ENCODE measurements at regions of chr1 and their contacts with region 1.

Region 1: DNA sequence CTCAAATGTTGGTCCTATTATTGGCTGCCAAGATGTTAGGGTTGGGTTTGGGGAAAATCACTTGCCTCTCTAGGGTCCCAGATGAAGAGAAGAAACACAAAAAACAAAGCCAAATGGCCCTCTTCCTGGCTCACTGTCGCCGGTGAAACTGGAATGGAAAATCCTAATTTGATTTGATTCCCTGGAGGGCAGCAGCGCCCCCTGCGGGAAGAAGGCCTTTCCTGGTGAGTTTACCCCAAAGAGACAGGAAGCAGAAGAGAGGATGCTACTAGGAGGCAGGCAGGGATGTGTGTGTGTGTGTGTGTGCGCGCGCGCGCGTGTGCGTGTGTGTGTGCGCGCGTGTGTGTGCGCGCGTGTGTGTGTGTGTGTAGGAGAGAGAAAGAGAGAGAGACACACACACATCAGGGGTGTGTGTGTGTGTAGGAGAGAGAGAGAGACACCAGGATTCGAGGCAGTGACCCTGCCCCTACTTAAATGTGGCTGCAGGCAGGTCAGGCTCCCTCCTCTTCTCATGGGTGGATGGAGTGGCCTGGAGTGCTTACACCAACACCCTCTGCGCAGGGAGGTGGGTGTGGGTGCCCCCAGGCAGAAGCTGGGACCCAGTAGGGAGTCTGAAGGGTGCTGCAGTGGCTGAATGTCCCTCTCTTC is 3.1 kb upstream of the SELENON start:
- DNase-seq: peak; percentile 84 to 93 (median 89)
- H3K4me3 ChIP-seq: no peak overlapping the region
- H3K27ac ChIP-seq: peak overlapping the region in 1 of 2 donors; percentile 48
- H3K4me1 ChIP-seq: peaks cover 0 to 28% (median 10%) of the 10 kb centered on the region in 3 donors
- H3K27me3 ChIP-seq: no peaks in the 10 kb centered on the region
- CTCF ChIP-seq: peak; percentile 93

Region 2: GRCh38 chr1:25492323-25492722 is 304.6 kb before region 1 on chr1:
- intact Hi-C with region 1: no loop called
- DNase-seq: no peak
- H3K4me3 ChIP-seq: no peak overlapping the region
- H3K27ac ChIP-seq: no peak overlapping the region
- H3K4me1 ChIP-seq: no peaks in the 10 kb centered on the region
- H3K27me3 ChIP-seq: no peaks in the 10 kb centered on the region
- CTCF ChIP-seq: no peak

Region 3: GRCh38 chr1:25616095-25616986 is 180.6 kb before region 1 on chr1 and contains the start of gene MAN1C1:
- intact Hi-C with region 1: loop called (anchors 10 kb)
- DNase-seq: peak; percentile 87 to 96 (median 92)
- H3K4me3 ChIP-seq: peak within 1 kb of the TSS in 2 of 3 donors; percentile 57 to 65
- H3K27ac ChIP-seq: peak within 1 kb of the TSS; percentile 58 to 74
- H3K4me1 ChIP-seq: peaks cover 0 to 22% (median 9%) of the 10 kb centered on the region in 3 donors
- H3K27me3 ChIP-seq: peaks cover 2% of the 10 kb centered on the region
- CTCF ChIP-seq: peak; percentile 25
- total RNA-seq, gene MAN1C1: 31.7 TPM

Region 4: GRCh38 chr1:25858906-25859789 is 62.2 kb after region 1 on chr1 and contains the start of gene AUNIP:
- intact Hi-C with region 1: no loop called
- DNase-seq: peak; percentile 84 to 96 (median 91)
- H3K4me3 ChIP-seq: peak within 1 kb of the TSS; percentile 72 to 76 (median 75)
- H3K27ac ChIP-seq: peak within 1 kb of the TSS; percentile 63 to 73
- H3K4me1 ChIP-seq: peaks cover 0 to 4% (median 0%) of the 10 kb centered on the region in 3 donors
- H3K27me3 ChIP-seq: no peaks in the 10 kb centered on the region
- CTCF ChIP-seq: no peak
- total RNA-seq, gene AUNIP: 0.38 TPM

Region 5: GRCh38 chr1:25959611-25960010 is 162.7 kb after region 1 on chr1:
- intact Hi-C with region 1: no loop called
- DNase-seq: peak in 1 of 5 donors; percentile 18
- H3K4me3 ChIP-seq: no peak overlapping the region
- H3K27ac ChIP-seq: no peak overlapping the region
- H3K4me1 ChIP-seq: no peaks in the 10 kb centered on the region
- H3K27me3 ChIP-seq: no peaks in the 10 kb centered on the region
- CTCF ChIP-seq: no peak

Region 6: GRCh38 chr1:26602378-26602959 is 805.5 kb after region 1 on chr1:
- intact Hi-C with region 1: no loop called
- DNase-seq: peak in 3 of 5 donors; percentile 57 to 88 (median 85)
- H3K4me3 ChIP-seq: no peak overlapping the region
- H3K27ac ChIP-seq: no peak overlapping the region
- H3K4me1 ChIP-seq: no peaks in the 10 kb centered on the region
- H3K27me3 ChIP-seq: no peaks in the 10 kb centered on the region
- CTCF ChIP-seq: peak; percentile 93